A549 (cell line): ENCODE measurements at regions of chr17 and their contacts with region 1.

Region 1: GRCh38 chr17:75205037-75205792 is at the start of gene NUP85:
- DNase-seq: peak; percentile 99 to 100
- ATAC-seq: peak; percentile 92 to 94
- H3K4me3 ChIP-seq: peak within 1 kb of the TSS; percentile 87
- H3K27ac ChIP-seq: peak within 1 kb of the TSS; percentile 94 to 96
- H3K4me1 ChIP-seq: peaks cover 19% of the 10 kb centered on the region; the same call in 2 of the 3 replicates
- CTCF ChIP-seq: no peak
- EP300 ChIP-seq: no peak; a peak in 1 of 5 replicates
- POLR2A ChIP-seq: peak; percentile 96
- RAD21 ChIP-seq: no peak
- polyA plus RNA-seq, gene NUP85: 110 and 124 TPM in 2 replicates

Region 2: DNA sequence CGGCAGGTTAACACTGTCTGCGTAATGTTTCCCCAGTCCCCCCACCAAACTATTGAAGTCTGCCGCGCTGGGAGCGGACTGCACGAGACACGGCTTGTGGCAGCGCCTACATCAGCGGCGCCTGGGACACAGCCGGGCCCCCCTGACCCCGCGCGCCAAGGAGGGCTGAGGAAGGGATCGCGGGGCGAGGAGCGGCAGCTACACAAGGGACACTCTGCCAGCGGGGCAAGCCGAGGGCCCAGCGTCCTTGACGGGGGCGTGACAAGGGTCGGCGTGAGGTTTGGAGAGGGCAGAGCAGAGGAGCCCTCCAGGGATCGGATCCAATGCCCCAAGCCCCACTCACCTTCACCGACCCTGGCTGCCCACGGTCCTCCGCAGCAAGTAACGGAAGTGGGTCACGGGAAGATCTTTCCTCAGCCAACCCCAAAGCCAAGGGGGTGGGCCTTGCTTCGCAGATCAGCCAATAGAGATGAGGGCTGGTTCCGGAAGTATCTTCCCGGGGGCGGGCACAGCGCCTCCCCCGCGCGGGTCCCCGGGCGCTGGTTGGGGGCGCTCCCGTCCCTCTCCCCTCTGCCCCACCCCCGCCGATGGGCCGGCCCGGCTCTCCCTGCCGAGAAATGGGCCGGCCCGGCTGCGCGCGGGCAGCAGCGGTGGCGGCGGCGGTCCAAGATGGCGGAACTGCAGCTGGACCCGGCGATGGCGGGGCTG is 158.5 kb before region 1 on chr17 and contains the starts of genes ATP5PD and KCTD2:
- CTCF ChIA-PET with region 1: interaction called, 14 read pairs
- POLR2A ChIA-PET with region 1: no interaction called
- DNase-seq: peak; percentile 98 to 99
- ATAC-seq: peak; percentile 98 to 99
- H3K4me3 ChIP-seq: peak within 1 kb of the TSS; percentile 94
- H3K27ac ChIP-seq: peak within 1 kb of the TSS; percentile 93 to 97
- H3K4me1 ChIP-seq: peaks cover 16% of the 10 kb centered on the region
- CTCF ChIP-seq: no peak
- EP300 ChIP-seq: no peak
- POLR2A ChIP-seq: peak; percentile 90
- RAD21 ChIP-seq: 0 out of 5 replicates have a peak, but pooled peaks of 1 of the 2 experiments have one; percentile 21
- polyA plus RNA-seq, gene ATP5PD: 314 and 333 TPM in 2 replicates
- polyA plus RNA-seq, gene KCTD2: 31.3 and 34.1 TPM in 2 replicates

Region 3: DNA sequence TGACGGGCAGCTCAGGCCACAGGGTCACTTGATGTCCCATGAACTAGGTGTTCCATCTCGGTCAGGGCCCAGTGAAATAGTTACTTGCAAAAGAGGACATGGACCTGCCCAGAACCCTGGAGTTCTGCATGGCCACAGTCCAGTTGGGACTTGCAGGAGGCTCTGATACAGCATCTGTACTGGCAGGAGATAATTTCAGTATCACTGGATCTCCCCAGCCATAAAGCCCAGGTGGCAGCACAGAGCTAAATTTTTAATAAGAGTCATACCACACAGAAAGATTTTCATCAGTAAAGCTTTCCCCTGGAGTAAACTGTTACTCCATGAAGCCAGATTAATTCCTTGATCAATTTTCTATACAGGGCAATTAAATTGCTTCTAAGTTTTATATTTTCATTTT is 135.4 kb before region 1 on chr17:
- CTCF ChIA-PET with region 1: interaction called, 34 read pairs
- POLR2A ChIA-PET with region 1: interaction called, 3 read pairs
- DNase-seq: peak; percentile 68 to 78
- ATAC-seq: peak; percentile 80 to 83
- H3K4me3 ChIP-seq: no peak overlapping the region
- H3K27ac ChIP-seq: no peak overlapping the region; a peak in 1 of 6 replicates
- H3K4me1 ChIP-seq: peaks cover 3% of the 10 kb centered on the region; the same call in 1 of the 3 replicates
- CTCF ChIP-seq: peak; percentile 78
- EP300 ChIP-seq: no peak
- POLR2A ChIP-seq: no peak
- RAD21 ChIP-seq: peak; percentile 80 to 83

Region 4: DNA sequence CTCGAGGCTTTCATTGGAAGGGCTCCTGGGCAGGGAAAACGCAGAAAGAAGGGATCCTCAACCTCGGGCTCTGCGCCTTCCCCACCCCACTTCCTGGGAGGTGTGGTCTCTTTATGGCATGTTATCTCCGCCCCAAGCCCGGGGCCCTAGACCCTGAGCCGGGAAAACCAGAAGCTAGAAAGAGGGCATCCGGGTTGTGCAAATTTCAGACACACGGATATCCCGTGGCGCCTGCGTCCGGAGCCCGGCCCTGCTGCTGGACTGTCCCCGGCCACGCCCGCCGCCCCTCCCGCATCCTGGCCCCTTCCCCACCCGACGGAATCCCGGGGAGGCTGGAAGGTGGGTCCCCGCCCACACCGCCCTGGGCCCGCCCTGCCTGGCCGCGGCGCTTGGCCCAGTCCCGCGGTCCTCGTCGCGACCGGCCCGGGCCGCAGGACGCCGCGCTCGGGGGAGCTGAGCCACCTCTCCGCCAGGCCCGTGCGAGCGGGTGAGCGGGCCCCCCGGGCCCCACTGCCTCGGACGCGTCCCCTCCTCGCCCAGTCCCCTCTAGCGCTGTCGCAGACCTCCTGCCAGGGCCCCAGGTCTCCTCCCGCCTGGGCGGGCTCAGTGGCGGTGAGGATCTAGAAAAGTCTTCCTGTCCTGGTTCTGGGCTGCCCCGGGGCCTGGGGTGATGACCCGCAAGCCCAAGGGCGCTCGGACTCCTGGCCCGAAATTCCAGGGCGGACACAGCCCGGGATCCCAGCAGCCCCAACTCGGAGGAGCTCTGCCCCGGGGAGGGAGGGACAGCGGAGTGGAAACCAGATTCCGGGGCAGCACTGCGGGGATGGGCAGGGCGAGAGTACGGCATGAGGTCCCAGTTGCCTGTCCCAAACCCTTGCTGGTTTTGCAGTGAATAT is 117.4 kb before region 1 on chr17 and contains the start of gene SLC16A5:
- CTCF ChIA-PET with region 1: interaction called, 10 read pairs
- POLR2A ChIA-PET with region 1: no interaction called
- DNase-seq: peak; percentile 95 to 99
- ATAC-seq: peak; percentile 75 to 82
- H3K4me3 ChIP-seq: peak within 1 kb of the TSS; percentile 67
- H3K27ac ChIP-seq: peak within 1 kb of the TSS; percentile 95 to 96
- H3K4me1 ChIP-seq: peaks cover 77% of the 10 kb centered on the region
- CTCF ChIP-seq: no peak
- EP300 ChIP-seq: no peak
- POLR2A ChIP-seq: peak; percentile 87
- RAD21 ChIP-seq: peak in 1 of 2 experiments; percentile 28; a peak in 1 of 5 replicates
- polyA plus RNA-seq, gene SLC16A5: 19.0 and 20.1 TPM in 2 replicates

Region 5: GRCh38 chr17:75138519-75138918 is 66.7 kb before region 1 on chr17:
- CTCF ChIA-PET with region 1: interaction called, 12 read pairs
- POLR2A ChIA-PET with region 1: no interaction called
- DNase-seq: no peak
- ATAC-seq: no peak
- H3K4me3 ChIP-seq: no peak overlapping the region
- H3K27ac ChIP-seq: no peak overlapping the region
- H3K4me1 ChIP-seq: no peaks in the 10 kb centered on the region
- CTCF ChIP-seq: no peak
- EP300 ChIP-seq: no peak
- POLR2A ChIP-seq: no peak
- RAD21 ChIP-seq: no peak

Region 6: DNA sequence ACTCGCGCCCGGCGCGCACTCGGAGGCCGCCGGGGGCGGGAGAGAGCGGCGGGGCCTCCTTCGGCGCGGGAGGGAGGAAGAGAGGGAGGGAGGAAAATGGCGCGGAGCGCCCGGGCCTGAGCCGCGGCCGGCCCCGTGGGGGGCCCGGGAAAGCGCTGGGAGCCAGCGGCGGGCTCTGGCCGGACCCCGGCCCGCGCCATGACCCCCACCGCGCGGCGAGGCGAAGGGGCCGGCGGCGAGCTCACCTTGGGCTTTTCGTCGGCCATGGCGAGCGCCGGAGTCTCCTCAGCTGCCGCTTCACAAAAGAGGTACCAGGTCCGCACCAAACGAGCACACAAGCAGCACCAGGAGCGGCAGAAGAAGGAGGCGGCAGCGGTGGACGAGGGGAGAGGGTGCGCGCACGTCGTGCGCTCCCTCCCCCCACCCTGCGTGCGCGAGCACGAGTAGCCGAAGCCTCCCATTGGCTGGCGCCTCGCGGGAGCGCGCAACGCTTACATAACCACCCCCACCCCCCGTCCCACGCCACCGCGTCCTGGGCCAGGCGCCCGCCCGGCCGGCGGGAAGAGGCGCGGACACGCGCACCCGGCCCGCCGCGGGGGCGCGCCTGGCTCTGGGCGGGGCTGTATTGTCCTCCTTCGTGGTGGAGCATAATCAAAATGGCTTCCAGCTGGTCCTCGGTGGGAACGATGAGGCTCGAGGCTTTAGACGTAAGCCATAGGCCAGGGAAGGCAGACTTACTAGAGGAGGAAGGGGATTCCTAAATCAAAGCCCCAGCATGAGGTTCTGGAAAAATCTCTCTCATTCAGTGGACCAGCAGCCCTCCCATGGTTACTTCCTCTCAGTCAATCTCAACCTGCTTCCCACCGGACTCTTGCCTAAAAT is 22.4 kb before region 1 on chr17 and contains the start of gene SUMO2:
- CTCF ChIA-PET with region 1: interaction called, 178 read pairs
- POLR2A ChIA-PET with region 1: interaction called, 3 read pairs
- DNase-seq: peak; percentile 98
- ATAC-seq: peak; percentile 87 to 92
- H3K4me3 ChIP-seq: peak within 1 kb of the TSS; percentile 96
- H3K27ac ChIP-seq: peak within 1 kb of the TSS; percentile 93 to 98
- H3K4me1 ChIP-seq: peaks cover 15% of the 10 kb centered on the region; the same call in 2 of the 3 replicates
- CTCF ChIP-seq: no peak
- EP300 ChIP-seq: no peak
- POLR2A ChIP-seq: peak; percentile 67
- RAD21 ChIP-seq: no peak
- polyA plus RNA-seq, gene SUMO2: 400 and 545 TPM in 2 replicates

Region 7: DNA sequence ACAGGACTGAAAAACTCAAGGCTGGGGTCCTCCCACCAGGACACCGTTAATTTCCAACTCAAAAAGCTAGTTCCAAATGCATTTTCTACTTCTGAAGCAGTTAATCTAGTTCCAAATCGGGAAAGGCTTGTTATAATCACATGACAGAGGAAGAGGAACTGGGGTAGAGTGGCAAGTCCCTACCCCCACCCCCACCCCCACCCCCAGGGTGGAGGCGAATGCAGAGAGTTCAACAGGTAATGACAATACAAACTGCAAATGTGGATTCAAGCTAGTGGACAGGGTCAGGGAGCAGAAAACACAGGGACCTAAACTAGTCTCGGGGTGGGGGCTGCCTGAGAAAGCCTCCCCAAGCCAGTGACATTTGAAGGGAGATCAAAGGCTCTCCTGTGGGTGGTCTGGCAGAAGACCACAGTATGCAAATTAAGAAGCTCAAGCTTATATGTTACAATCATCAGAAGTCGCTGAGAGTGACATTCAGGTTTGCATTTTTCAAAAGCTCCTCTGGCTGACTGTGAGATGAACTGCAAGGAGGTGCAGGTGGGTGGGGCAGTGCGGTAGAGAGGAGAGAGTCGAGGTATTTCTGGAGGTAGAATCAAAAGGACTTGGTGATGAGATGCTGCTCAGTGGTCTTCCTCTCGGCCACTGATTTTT is 140.4 kb after region 1 on chr17:
- CTCF ChIA-PET with region 1: no interaction called
- POLR2A ChIA-PET with region 1: no interaction called
- DNase-seq: no peak
- ATAC-seq: no peak
- H3K4me3 ChIP-seq: no peak overlapping the region
- H3K27ac ChIP-seq: no peak overlapping the region
- H3K4me1 ChIP-seq: peaks cover 12% of the 10 kb centered on the region; the same call in 1 of the 3 replicates
- CTCF ChIP-seq: no peak
- EP300 ChIP-seq: no peak
- POLR2A ChIP-seq: no peak
- RAD21 ChIP-seq: no peak